Left colon (tissue), 2 donors: ENCODE measurements at regions of chr1 and their contacts with region 1.

Region 1: DNA sequence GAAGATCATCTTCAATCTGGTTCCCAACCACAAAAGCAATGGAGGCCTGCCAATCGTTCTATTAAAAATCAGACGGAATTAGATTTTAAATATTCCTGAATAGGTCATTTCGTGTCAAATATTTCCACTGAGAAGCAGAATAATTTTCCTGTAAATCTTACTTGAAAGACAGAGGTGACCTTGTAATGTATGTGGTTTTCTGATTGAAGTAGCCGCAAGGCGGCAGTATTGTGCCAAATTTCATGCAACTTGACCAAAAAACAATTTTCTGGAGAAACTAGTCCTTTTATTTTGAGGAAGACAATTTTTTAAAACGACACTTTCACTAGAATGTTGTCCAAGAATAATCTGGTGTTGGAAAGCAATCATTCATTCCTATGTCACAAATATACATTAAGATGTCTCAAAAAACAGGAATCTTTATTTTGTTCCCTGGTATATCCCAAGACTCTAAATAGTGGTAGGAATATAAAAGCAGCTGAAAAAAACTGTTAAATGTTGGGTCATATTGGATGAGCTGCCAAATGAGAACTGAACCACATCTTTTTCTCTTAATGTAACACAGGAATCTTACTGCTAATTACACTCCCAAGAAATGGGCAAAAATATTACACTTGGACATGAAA is 33.6 kb downstream of the SPAG17 start:
- DNase-seq: peak in 1 of 2 donors; percentile 58
- ATAC-seq: no peak

Region 2: DNA sequence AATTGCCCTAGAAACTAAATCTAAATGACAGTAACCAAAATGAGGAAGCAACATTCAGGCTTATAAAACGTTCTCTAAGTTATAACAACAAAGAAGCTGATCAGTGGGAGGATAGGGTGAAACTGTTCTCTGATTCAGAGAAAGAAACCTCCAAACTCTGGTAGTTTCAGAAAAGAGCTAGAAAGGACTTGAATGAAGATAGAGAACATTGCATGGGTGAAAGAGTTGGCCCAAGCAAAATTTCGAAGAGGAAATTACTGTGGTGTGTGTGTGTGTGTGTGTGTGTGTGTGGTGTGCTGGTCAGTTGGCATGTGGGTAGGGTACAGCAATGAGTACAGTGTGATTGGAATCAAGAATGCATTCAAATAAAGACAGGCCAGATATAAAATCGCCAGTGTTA is 50.1 kb after region 1 on chr1:
- intact Hi-C with region 1: no loop called
- DNase-seq: no peak
- ATAC-seq: no peak

Region 3: DNA sequence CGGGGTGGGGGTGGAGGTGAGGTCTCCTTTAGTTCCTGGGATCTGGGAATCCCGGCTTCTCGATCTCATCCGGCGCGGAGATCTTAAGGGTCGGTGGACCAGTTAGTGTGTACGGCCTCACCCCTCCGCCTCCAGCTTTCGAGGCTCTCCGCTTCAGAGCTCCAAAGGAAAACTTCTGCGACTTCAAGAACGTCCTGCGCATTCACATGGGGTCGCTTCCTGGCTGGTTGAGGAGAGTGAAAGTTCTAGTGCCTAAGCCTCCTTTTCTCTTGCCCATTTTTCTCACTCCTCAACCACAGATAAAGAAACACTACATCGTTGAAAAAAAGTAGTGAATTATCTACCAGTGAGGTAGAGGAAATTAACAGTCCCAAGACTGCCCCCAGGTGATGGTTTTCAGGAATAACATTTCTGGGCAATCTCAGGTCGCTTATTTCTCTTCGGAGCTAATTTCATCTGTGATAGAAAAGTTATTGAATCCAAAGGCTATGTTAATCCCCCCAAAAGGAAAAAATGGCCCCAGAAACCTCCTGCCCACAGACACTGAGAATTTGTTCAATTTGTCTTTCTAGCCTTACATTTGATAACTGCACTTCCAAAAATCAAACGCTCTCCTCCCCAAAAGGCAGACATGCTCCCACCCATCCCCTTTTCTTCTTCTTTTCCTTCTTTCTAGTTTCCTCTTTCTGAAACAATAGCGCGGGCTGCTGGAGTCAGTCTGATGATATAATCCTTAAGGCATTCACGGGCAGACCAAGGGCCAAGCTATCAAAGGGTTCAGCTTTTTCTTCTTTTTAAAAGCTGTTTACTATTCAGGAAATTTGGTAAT is 857.3 kb after region 1 on chr1:
- intact Hi-C with region 1: loop called in 1 of 2 experiments (anchors 5 kb)
- DNase-seq: no peak
- ATAC-seq: peak; percentile 72